Activated CD4-positive, alpha-beta memory T cell treated with anti-CD3 and anti-CD28 coated beads for 36 hours (primary cell): ENCODE measurements at regions of chr1 and their contacts with region 1.

Region 1: GRCh38 chr1:19390901-19391595 is 78.9 kb downstream of the SLC66A1 start:
- DNase-seq: peak; percentile 69
- H3K4me3 Mint-ChIP-seq: peak overlapping the region; percentile 76
- H3K27ac Mint-ChIP-seq: peak overlapping the region; percentile 94
- H3K4me1 Mint-ChIP-seq: peaks cover 76% of the 10 kb centered on the region
- H3K27me3 Mint-ChIP-seq: no peaks in the 10 kb centered on the region

Region 2: GRCh38 chr1:19325958-19326748 is 64.9 kb before region 1 on chr1:
- CTCF ChIA-PET with region 1: no interaction called
- POLR2A ChIA-PET with region 1: no interaction called
- intact Hi-C with region 1: no loop called
- DNase-seq: no peak
- H3K4me3 Mint-ChIP-seq: no peak overlapping the region
- H3K27ac Mint-ChIP-seq: no peak overlapping the region
- H3K4me1 Mint-ChIP-seq: no peaks in the 10 kb centered on the region
- H3K27me3 Mint-ChIP-seq: no peaks in the 10 kb centered on the region

Region 3: DNA sequence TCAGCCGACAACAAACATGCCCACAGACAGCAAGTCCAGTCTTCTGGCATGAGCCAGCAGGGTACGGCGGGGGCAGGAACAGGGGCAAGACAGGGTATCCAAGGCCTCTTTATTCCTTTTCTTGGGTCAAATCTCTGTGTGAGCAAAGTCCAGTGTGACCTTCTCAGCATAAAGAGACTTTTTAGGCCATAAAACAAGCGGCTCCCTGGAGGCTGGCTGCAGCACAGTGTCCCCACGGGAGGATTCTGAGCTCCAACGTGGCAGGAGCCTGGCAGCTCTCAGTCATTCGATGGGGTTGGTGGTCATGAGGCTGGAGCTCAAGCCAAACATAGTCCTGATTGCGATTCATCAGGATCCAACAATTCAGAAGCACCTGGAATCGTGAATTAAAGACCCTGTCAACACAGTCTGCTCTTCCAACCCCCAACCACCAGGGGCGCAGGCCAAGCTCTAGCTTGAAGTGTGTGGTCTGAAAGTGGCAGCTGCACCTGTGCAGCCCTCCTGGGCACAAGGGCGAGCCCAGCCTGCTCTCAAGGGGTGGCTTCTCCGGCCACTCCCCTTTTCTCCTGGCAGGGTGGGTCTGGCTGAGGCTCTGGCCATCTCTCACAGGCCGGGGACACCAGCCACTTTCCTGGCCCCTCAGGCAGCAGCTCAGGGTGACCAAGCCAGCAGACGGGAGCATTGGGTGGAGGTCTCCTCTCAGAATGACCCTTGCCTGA is 16.8 kb before region 1 on chr1:
- CTCF ChIA-PET with region 1: interaction called, 27 read pairs
- POLR2A ChIA-PET with region 1: no interaction called
- intact Hi-C with region 1: no loop called
- DNase-seq: no peak
- H3K4me3 Mint-ChIP-seq: no peak overlapping the region
- H3K27ac Mint-ChIP-seq: no peak overlapping the region
- H3K4me1 Mint-ChIP-seq: peaks cover 40% of the 10 kb centered on the region
- H3K27me3 Mint-ChIP-seq: no peaks in the 10 kb centered on the region

Region 4: DNA sequence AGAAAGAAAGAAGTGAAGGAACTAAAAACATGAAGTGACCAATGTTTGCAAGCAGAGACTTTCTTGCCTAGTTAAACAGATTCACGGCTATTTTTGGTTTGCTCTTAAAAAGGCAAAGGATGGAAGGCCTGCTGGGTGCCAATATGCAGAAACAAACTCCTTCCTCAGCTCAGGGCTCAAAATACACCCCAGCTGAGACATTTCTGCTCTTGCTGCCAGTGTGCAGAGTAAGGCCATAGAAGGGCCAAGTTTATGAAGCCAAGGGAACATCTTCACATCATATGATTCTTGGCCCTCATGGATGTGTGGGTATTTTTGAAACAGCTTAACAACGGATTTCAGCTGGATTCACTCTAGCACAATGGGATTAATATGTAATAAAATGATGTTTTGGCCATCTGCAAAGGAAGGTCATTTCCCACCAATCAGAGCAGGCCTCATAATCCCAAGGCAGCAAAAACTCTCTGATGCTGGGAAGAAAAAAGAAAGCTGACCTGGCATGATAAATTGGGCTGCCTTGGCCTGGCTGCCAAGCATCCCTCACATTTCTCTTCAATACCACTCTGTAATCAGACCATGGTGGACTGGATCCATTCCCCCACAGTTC is 23.6 kb after region 1 on chr1:
- CTCF ChIA-PET with region 1: interaction called, 14 read pairs
- POLR2A ChIA-PET with region 1: no interaction called
- intact Hi-C with region 1: no loop called
- DNase-seq: no peak
- H3K4me3 Mint-ChIP-seq: no peak overlapping the region
- H3K27ac Mint-ChIP-seq: no peak overlapping the region
- H3K4me1 Mint-ChIP-seq: peaks cover 65% of the 10 kb centered on the region
- H3K27me3 Mint-ChIP-seq: no peaks in the 10 kb centered on the region

Region 5: GRCh38 chr1:19432943-19433718 is 42.1 kb after region 1 on chr1:
- CTCF ChIA-PET with region 1: interaction called, 8 read pairs
- POLR2A ChIA-PET with region 1: interaction called, 6 read pairs
- intact Hi-C with region 1: loop called (anchors 2 kb)
- DNase-seq: peak; percentile 57
- H3K4me3 Mint-ChIP-seq: no peak overlapping the region
- H3K27ac Mint-ChIP-seq: peak overlapping the region; percentile 31
- H3K4me1 Mint-ChIP-seq: peaks cover 85% of the 10 kb centered on the region
- H3K27me3 Mint-ChIP-seq: no peaks in the 10 kb centered on the region

Region 6: GRCh38 chr1:19651141-19651737 is 260.2 kb after region 1 on chr1:
- CTCF ChIA-PET with region 1: interaction called, 7 read pairs
- POLR2A ChIA-PET with region 1: no interaction called
- intact Hi-C with region 1: loop called (anchors 2 kb)
- DNase-seq: peak; percentile 71
- H3K4me3 Mint-ChIP-seq: no peak overlapping the region
- H3K27ac Mint-ChIP-seq: no peak overlapping the region
- H3K4me1 Mint-ChIP-seq: peaks cover 34% of the 10 kb centered on the region
- H3K27me3 Mint-ChIP-seq: no peaks in the 10 kb centered on the region